Cardiac septum (tissue), 1 donor: ENCODE measurements at regions of chr7 and their contacts with region 1.

Region 1: DNA sequence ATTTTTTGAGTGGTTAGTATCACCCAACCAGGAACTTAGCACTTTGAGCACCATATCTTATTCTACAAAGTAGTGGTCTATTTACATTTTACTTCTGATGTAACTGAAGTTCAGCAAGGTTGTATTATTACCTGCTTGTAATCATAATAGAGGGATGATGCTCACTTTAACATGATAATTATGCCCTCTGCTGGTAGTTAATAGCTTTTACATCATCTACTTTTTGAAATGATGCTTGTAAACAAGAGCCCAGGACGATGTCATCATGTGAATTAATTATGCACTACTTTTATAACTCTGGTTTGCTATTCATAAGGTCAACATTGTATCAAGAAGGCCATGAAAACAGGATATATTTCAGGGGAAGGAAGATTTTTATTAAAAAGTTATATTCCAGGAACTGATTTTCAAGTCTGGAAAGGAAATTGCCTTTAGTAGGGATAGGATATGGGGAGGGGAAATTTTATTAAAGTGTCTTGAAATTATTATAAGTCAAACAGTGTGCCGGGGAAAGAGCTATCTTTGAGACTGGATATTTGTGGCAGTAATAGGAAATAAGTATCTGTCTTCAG is 80.3 kb upstream of the SCIN start:
- DNase-seq: no peak

Region 2: DNA sequence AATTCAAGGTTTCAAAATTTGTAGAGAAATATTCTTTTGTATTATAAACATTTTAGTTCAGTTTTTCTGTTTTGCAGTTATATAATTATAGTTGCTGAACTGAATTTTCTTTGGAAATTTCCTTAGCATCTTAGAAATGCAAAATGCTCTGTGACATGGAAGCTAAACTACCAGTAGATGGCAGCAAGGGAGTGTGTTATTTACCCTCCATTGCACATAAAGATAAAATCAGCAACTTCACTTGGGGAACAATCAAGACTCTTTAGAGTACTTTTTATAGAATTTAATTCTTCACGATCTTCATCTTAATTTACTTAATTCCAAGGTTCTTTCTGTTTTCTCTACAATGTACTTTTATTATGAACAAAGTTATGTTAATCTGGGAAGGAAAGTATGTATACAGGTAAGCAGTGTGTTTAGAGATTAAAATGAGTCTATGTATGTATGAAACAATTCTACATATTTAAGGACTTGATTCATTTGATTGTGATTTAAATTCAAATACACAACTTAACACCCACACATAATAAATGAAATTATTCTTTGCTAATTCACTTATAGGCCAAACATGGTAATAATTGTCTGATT is 1062.4 kb before region 1 on chr7:
- intact Hi-C with region 1: loop called (anchors 10 kb)
- DNase-seq: no peak

Region 3: DNA sequence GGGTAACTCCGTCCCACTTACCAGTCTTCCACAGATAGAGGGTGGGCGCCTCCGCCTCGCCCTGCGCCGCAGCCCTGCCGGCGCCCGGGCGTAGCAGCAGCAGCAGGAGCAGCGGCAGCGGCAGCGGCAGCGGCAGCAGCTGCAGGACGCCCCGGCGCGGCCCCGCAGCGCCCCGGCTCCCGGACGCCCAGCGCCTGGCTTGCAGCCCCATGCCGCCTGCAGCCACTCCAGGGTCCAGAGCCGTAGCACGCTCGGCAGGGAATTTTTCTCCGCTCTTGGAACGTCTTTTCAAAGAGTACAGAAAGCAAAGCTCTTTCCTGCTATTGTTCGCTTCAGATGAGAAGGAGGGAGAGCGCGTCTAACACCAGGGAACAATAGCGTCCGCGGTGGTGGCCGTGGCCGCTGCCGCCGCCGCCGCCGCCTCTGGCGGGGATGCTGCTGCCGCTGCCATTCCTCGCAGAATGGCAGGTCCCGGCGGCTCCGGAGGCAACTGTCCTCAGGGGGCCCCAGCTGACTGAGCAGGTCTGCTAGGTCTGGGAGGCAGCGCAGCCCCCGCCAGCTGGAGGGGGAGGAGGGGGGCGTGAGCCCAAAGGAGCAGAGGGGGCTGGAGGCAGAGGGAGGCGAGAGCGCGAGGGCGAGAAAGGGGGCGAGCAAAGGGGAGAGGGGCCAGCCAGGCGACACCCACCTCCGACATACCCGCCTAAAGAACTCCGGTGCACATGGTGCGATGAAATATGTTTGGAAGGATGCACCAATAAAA is 658.3 kb before region 1 on chr7 and contains the start of gene THSD7A:
- intact Hi-C with region 1: loop called (anchors 10 kb)
- DNase-seq: peak; percentile 75
- total RNA-seq, gene THSD7A: 3.4 TPM

Region 4: DNA sequence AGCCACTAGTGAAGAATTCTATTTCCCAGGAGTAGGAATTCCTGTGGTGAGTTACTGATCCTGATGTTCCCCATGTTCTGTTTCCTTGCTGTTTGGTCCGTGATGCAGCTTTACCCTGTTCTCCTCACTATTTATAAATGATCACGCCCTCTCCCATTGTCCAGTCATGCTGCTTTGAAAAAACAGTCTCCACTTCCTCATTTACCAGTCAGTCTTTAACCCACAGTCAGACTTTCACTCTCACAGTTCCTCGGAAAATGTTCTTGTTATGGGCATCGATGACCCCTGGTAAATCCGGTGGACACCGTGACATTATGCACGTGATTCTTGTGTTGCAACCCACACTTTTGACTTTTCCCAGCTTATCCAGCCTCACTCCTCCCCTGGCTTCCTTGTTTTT is 94.7 kb after region 1 on chr7:
- intact Hi-C with region 1: no loop called
- DNase-seq: no peak

Region 5: GRCh38 chr7:12706876-12707536 is 216.8 kb after region 1 on chr7:
- intact Hi-C with region 1: no loop called
- DNase-seq: no peak